ENCODE measurements at regions of chr10 and their contacts with region 1.

Region 1: DNA sequence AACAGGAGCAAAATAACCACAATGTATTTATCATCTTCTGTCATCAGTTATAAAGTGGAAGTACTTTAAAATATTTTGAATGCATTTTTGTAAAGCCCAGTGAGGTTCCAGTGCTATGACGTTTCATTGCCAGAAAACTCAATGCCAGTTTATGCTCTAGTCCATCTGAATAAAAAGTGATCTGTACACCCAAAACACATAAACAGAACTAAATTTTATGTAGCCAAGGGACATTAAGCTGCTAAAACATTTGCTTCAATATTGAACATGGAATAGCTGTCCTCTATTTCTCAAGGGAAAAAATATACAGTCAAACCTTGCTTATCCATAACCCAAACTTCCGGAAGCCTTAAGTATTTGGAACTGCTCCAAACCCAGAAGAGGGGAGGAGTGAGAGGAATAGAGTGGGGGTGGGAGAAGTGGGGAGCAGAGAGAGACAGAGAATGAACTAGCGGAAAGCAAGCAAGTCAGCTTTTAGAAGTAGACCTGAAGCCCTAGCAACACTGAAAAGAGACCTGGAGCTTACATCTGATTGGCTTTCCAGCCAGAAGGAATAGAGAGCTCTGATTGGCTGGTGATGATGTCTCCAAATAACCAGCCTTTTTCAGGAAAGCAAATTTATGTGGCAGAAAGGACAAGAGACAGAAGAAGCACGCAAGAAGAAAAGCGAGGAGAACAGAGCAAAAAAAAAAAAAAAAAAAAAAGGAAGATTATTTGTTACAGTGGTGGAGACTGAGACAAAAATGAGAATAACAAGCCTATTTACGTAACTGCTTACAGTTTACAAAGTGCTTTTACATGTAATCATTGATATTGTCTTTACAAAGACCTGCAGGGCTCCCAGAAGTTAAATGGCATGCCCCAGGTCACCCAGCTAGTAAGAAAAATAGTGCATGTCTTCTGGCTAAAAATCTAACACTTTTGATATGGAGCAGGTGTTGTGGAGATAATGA is 196.0 kb downstream of the RNLS start:
- DNase-seq: peak in 2 of 5 donors; percentile 24 to 51
- ATAC-seq: peak; percentile 72 to 95 (median 92)
- H3K4me3 ChIP-seq: peak overlapping the region in 9 of 12 donors; percentile 5 to 48 (median 32)
- H3K27ac ChIP-seq: peak overlapping the region in 11 of 12 donors; percentile 43 to 73 (median 55)
- H3K4me1 ChIP-seq: peaks cover 0 to 52% (median 19%) of the 10 kb centered on the region in 12 donors
- H3K27me3 ChIP-seq: no peaks in the 10 kb centered on the region
- CTCF ChIP-seq: no peak
- POLR2A ChIP-seq: peak in 1 of 2 donors; percentile 35

Region 2: GRCh38 chr10:87850742-87851205 is 536.3 kb before region 1 on chr10:
- intact Hi-C with region 1: loop called in 2 of 10 experiments (anchors 5 kb)
- DNase-seq: peak in 4 of 5 donors; percentile 55 to 77 (median 62)
- ATAC-seq: peak in 3 of 4 donors; percentile 93 to 96 (median 94)
- H3K4me3 ChIP-seq: no peak overlapping the region
- H3K27ac ChIP-seq: no peak overlapping the region
- H3K4me1 ChIP-seq: peaks cover 0 to 9% (median 0%) of the 10 kb centered on the region in 12 donors
- H3K27me3 ChIP-seq: no peaks in the 10 kb centered on the region
- CTCF ChIP-seq: peak; percentile 46 to 81 (median 72)
- POLR2A ChIP-seq: no peak

Region 3: GRCh38 chr10:88114368-88114767 is 272.7 kb before region 1 on chr10:
- intact Hi-C with region 1: loop called in 5 of 10 experiments (anchors 5 to 10 kb)
- DNase-seq: peak; percentile 34 to 60 (median 48)
- ATAC-seq: peak; percentile 47 to 90 (median 78)
- H3K4me3 ChIP-seq: no peak overlapping the region
- H3K27ac ChIP-seq: no peak overlapping the region
- H3K4me1 ChIP-seq: peaks cover 0 to 69% (median 3%) of the 10 kb centered on the region in 12 donors
- H3K27me3 ChIP-seq: no peaks in the 10 kb centered on the region
- CTCF ChIP-seq: peak; percentile 48 to 76 (median 66)
- POLR2A ChIP-seq: no peak

Region 4: DNA sequence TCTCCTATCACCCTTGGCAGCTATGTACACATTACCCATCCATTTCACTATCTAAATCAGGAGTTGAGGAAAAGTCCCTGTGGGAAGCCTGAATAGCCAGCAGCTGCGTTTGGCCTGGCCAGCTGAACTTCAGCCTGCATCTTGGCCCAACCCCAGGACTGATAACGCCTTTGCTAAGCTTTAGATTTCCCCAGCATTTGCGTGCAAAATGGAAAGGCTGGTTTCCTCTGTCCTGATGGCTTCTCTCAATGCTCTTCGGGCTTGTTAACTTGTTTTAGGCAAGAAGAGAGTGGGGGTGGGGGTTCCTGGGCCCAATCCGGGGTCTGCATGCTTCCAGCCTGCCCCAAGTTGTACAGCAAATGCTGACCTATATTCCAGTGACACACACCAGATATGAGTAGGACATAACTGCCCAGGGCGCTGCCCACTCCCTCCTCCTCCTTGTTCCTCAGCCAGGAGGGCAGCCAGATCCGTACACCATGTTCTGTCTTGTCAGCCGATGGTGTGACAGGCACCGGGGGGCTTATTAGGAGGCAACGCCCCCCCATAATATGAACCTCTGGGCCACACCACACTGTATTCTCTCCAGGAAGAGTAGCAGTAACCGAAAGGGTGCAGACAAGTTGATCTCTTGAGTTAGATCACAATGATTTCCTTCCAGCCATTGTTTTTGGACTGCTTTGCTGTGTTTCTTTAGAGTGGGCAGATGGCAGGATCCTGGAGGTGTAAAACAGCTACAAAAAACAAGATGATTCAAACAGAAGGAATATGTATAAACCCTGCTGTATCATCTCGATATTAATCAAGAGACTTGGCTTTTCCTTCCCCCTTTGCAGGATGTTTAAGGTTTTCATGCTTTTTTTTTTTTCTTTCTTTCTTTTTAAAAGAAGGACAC is 143.0 kb before region 1 on chr10:
- intact Hi-C with region 1: loop called in 6 of 10 experiments (anchors 5 to 10 kb)
- DNase-seq: peak; percentile 84 to 90 (median 88)
- ATAC-seq: peak; percentile 89 to 97 (median 92)
- H3K4me3 ChIP-seq: peak overlapping the region in 9 of 12 donors; percentile 9 to 39 (median 28)
- H3K27ac ChIP-seq: peak overlapping the region; percentile 76 to 90 (median 84)
- H3K4me1 ChIP-seq: peaks cover 6 to 57% (median 40%) of the 10 kb centered on the region in 12 donors
- H3K27me3 ChIP-seq: no peaks in the 10 kb centered on the region
- CTCF ChIP-seq: no peak
- POLR2A ChIP-seq: no peak

Region 5: DNA sequence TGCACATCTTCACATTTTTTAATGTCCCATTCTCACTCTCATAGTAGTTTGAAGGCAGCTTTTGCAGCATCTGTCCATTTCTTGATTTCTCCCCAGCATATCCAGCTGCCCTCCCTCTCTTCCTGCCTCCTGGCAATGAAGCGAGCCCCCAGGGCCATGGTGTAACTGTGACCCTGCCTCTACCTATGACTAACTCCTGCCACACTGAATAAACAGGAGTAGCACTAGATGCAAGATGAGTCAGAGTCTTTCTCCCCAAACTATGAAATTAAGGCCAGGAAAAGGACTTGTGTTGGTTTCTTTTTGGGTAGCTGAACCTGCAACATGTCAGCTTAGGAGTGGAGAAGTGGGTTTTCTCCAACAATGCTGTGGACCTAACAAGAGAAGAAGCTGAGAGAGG is 133.0 kb before region 1 on chr10:
- intact Hi-C with region 1: loop called in 8 of 10 experiments (anchors 2 to 10 kb)
- DNase-seq: peak in 1 of 5 donors; percentile 41
- ATAC-seq: peak in 2 of 4 donors; percentile 63 to 67
- H3K4me3 ChIP-seq: no peak overlapping the region
- H3K27ac ChIP-seq: peak overlapping the region in 3 of 12 donors; percentile 23 to 84 (median 73)
- H3K4me1 ChIP-seq: peaks cover 0 to 44% (median 4%) of the 10 kb centered on the region in 12 donors
- H3K27me3 ChIP-seq: no peaks in the 10 kb centered on the region
- CTCF ChIP-seq: no peak
- POLR2A ChIP-seq: no peak

Region 6: GRCh38 chr10:88952647-88953111 is 565.6 kb after region 1 on chr10 and contains the start of gene ACTA2:
- intact Hi-C with region 1: no loop called
- DNase-seq: peak; percentile 40 to 70 (median 49)
- ATAC-seq: peak; percentile 47 to 75 (median 56)
- H3K4me3 ChIP-seq: peak within 1 kb of the TSS in 11 of 12 donors; percentile 3 to 60 (median 37)
- H3K27ac ChIP-seq: peak within 1 kb of the TSS in 11 of 12 donors; percentile 56 to 90 (median 73)
- H3K4me1 ChIP-seq: peaks cover 0 to 33% (median 10%) of the 10 kb centered on the region in 12 donors
- H3K27me3 ChIP-seq: no peaks in the 10 kb centered on the region
- CTCF ChIP-seq: no peak
- POLR2A ChIP-seq: no peak
- total RNA-seq, gene ACTA2: 70.9 to 244 (median 86.7) TPM